ENCODE measurements at regions of chr3 and their contacts with region 1.

Region 1: GRCh38 chr3:186259612-186260383 is 102.2 kb downstream of the DGKG start:
- DNase-seq: no peak
- H3K4me3 ChIP-seq: no peak overlapping the region
- H3K27ac ChIP-seq: peak overlapping the region; percentile 71 to 88 (median 79)
- H3K4me1 ChIP-seq: peaks cover 3 to 80% (median 61%) of the 10 kb centered on the region in 4 donors
- H3K27me3 ChIP-seq: no peaks in the 10 kb centered on the region
- CTCF ChIP-seq: peak; percentile 82 to 98 (median 84)
- EP300 ChIP-seq: no peak
- POLR2A ChIP-seq: no peak

Region 2: GRCh38 chr3:186540221-186540834 is 280.5 kb after region 1 on chr3:
- intact Hi-C with region 1: loop called (anchors 5 kb)
- DNase-seq: peak; percentile 93
- H3K4me3 ChIP-seq: peak overlapping the region in 3 of 4 donors; percentile 15 to 34 (median 30)
- H3K27ac ChIP-seq: peak overlapping the region in 3 of 4 donors; percentile 19 to 62 (median 49)
- H3K4me1 ChIP-seq: peaks cover 12 to 21% (median 19%) of the 10 kb centered on the region in 4 donors
- H3K27me3 ChIP-seq: no peaks in the 10 kb centered on the region
- CTCF ChIP-seq: peak; percentile 71 to 83 (median 77)
- EP300 ChIP-seq: no peak
- POLR2A ChIP-seq: no peak

Measured in esophagus muscularis mucosa (tissue), 4 donors.